Naive thymus-derived CD4-positive, alpha-beta T cell (primary cell): ENCODE measurements at regions of chr2 and their contacts with region 1.

Region 1: GRCh38 chr2:206556357-206556949 is 85.8 kb upstream of the FAM237A start:
- DNase-seq: peak in 5 of 9 donors; percentile 4 to 45 (median 32)
- ATAC-seq: no peak
- H3K4me3 ChIP-seq: no peak overlapping the region
- H3K4me3 Mint-ChIP-seq: no peak overlapping the region
- H3K27ac ChIP-seq: no peak overlapping the region
- H3K27ac Mint-ChIP-seq: no peak overlapping the region
- H3K4me1 ChIP-seq: peaks cover 0 to 6% of the 10 kb centered on the region in 2 donors
- H3K4me1 Mint-ChIP-seq: peaks cover 1 to 37% (median 26%) of the 10 kb centered on the region in 7 donors
- H3K27me3 ChIP-seq: no peaks in the 10 kb centered on the region
- H3K27me3 Mint-ChIP-seq: peaks cover 5 to 29% (median 11%) of the 10 kb centered on the region in 5 donors

Region 2: DNA sequence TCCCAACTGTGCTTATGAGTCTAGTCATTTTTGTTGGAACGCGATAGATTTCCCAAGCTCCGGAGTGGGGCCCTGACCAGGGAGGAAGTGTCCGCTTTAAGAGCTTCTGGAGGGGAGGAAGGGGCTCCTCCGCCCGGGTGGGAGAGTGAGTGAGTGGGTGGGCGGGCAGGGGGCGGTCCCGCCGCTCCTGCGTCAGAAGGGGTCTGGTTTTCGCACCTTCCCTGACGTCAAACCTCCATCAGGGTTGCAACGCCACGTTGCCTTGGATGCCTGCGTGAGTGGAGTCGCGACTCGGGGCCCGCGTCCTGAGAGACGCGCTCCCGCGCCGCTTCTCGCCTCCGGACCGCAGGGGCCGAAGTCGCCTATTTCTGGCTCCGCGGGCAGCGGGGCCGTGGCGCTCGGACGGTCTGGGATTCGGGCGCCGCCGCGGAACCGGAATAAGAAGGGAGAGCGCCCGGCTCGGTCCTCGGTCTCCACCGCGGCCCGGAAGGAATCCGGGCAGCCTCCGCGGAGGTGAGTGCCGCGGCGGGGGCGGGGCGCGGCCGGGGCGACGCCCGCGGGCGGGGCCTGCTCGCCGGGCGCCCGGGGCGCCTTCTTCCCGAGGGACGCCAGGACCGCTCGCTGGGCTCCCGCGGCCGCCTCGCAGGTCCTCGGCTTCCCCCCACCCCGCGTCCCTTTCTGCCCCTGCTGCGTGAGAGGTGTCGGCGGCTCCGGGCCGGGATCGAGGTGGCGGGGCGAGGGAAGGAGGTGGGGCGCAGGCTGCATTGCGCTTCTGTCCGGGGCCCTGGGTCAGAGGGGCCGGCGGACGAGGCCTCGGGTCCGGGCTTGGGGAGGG is 281.8 kb before region 1 on chr2 and contains the start of gene ZDBF2:
- CTCF ChIA-PET with region 1: no interaction called
- POLR2A ChIA-PET with region 1: no interaction called
- intact Hi-C with region 1: loop called in 1 of 2 experiments (anchors 10 kb)
- DNase-seq: peak; percentile 29 to 70 (median 62)
- ATAC-seq: peak; percentile 80
- H3K4me3 ChIP-seq: peak within 1 kb of the TSS; percentile 56
- H3K4me3 Mint-ChIP-seq: peak within 1 kb of the TSS; percentile 85 to 94 (median 91)
- H3K27ac ChIP-seq: peak within 1 kb of the TSS; percentile 79
- H3K27ac Mint-ChIP-seq: peak within 1 kb of the TSS; percentile 85 to 96 (median 94)
- H3K4me1 ChIP-seq: peaks cover 8 to 14% of the 10 kb centered on the region in 2 donors
- H3K4me1 Mint-ChIP-seq: peaks cover 9 to 25% (median 20%) of the 10 kb centered on the region in 7 donors
- H3K27me3 ChIP-seq: peaks cover 0 to 6% of the 10 kb centered on the region in 2 donors
- H3K27me3 Mint-ChIP-seq: peaks cover 14 to 69% (median 51%) of the 10 kb centered on the region in 5 donors
- total RNA-seq, gene ZDBF2: 9.1 to 22.4 (median 16.0) TPM

Region 3: GRCh38 chr2:206502729-206503128 is 53.7 kb before region 1 on chr2:
- CTCF ChIA-PET with region 1: no interaction called
- POLR2A ChIA-PET with region 1: no interaction called
- intact Hi-C with region 1: loop called in 1 of 2 experiments (anchors 1 kb)
- DNase-seq: no peak
- ATAC-seq: no peak
- H3K4me3 ChIP-seq: no peak overlapping the region
- H3K4me3 Mint-ChIP-seq: no peak overlapping the region
- H3K27ac ChIP-seq: no peak overlapping the region
- H3K27ac Mint-ChIP-seq: no peak overlapping the region
- H3K4me1 ChIP-seq: no peaks in the 10 kb centered on the region
- H3K4me1 Mint-ChIP-seq: peaks cover 0 to 8% (median 0%) of the 10 kb centered on the region in 7 donors
- H3K27me3 ChIP-seq: no peaks in the 10 kb centered on the region
- H3K27me3 Mint-ChIP-seq: peaks cover 4 to 9% (median 7%) of the 10 kb centered on the region in 5 donors

Region 4: GRCh38 chr2:206783718-206784117 is 227.3 kb after region 1 on chr2:
- CTCF ChIA-PET with region 1: interaction called, 4 read pairs
- POLR2A ChIA-PET with region 1: no interaction called
- intact Hi-C with region 1: loop called in 1 of 2 experiments (anchors 5 kb)
- DNase-seq: no peak
- ATAC-seq: peak; percentile 36
- H3K4me3 ChIP-seq: no peak overlapping the region
- H3K4me3 Mint-ChIP-seq: no peak overlapping the region
- H3K27ac ChIP-seq: no peak overlapping the region
- H3K27ac Mint-ChIP-seq: peak overlapping the region in 2 of 9 donors; percentile 22 to 58
- H3K4me1 ChIP-seq: no peaks in the 10 kb centered on the region
- H3K4me1 Mint-ChIP-seq: peaks cover 3 to 30% (median 19%) of the 10 kb centered on the region in 7 donors
- H3K27me3 ChIP-seq: no peaks in the 10 kb centered on the region
- H3K27me3 Mint-ChIP-seq: no peaks in the 10 kb centered on the region

Region 5: DNA sequence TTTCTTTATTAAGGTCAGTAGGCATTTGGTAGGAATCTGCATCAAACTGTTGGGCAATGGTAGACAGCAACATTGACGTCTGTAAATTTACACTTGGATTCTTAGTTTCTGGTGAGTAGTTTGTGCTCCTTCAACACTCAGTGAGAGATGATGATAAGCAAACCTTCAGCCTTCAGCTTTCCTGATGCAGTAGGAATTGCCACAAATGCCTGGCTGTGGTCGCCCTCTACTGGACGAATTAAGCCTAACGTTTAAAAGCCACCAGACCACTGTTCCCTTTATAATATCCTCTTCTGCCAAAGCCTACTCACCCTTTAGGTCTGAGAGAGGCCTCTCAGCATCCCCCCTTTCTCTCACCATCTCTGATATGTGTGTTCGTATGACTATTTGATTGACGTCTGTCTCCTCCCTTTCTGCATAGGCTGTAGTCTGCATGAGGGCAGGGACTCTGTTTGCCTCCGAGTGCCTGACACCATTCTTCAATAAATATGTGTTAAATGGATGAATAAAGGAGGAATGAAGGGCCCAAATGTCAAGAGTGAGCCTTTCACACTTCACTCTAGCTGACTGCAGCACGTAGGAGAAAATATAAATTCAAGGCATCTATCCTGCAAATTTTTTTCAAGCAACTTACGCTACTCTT is 1515.9 kb after region 1 on chr2:
- CTCF ChIA-PET with region 1: no interaction called
- POLR2A ChIA-PET with region 1: no interaction called
- intact Hi-C with region 1: loop called in 1 of 2 experiments (anchors 10 kb)
- DNase-seq: peak; percentile 15 to 62 (median 38)
- ATAC-seq: peak; percentile 78
- H3K4me3 ChIP-seq: no peak overlapping the region
- H3K4me3 Mint-ChIP-seq: no peak overlapping the region
- H3K27ac ChIP-seq: no peak overlapping the region
- H3K27ac Mint-ChIP-seq: no peak overlapping the region
- H3K4me1 ChIP-seq: no peaks in the 10 kb centered on the region
- H3K4me1 Mint-ChIP-seq: no peaks in the 10 kb centered on the region
- H3K27me3 ChIP-seq: peaks cover 0 to 3% of the 10 kb centered on the region in 2 donors
- H3K27me3 Mint-ChIP-seq: peaks cover 5 to 17% (median 10%) of the 10 kb centered on the region in 5 donors